Endothelial cell of umbilical vein (primary cell): ENCODE measurements at regions of chr15 and their contacts with region 1.

Region 1: DNA sequence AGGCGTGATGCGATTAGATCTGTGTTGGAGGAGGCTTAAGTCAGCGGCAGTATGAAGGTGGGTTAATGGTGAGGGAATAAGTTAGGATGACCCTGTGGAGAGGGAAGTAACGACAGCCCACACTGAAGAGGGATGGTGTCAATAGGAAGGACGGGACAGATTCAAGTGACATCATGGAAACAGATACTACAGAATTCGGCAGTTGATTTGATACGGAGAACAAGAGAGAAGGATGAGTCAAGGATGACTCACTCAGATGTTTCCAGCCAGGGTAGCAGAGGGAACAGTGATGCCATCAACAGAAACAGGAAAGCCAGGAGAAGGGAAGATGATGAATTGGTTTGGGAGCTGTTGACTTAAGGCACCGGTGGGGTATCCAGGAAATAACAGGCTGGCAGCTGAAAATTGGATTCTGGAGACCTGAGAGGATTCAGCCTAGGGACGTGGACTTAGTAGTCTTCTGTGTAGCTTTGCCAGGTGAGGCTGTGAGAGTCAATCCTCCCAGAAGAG is 38.0 kb downstream of the SHC4 start:
- DNase-seq: peak; percentile 59
- H3K4me3 ChIP-seq: no peak overlapping the region
- H3K27ac ChIP-seq: no peak overlapping the region
- H3K4me1 ChIP-seq: peaks cover 10% of the 10 kb centered on the region
- H3K27me3 ChIP-seq: peaks cover 2 to 9% of the 10 kb centered on the region in 2 experiments
- CTCF ChIP-seq: no peak
- POLR2A ChIP-seq: no peak

Region 2: DNA sequence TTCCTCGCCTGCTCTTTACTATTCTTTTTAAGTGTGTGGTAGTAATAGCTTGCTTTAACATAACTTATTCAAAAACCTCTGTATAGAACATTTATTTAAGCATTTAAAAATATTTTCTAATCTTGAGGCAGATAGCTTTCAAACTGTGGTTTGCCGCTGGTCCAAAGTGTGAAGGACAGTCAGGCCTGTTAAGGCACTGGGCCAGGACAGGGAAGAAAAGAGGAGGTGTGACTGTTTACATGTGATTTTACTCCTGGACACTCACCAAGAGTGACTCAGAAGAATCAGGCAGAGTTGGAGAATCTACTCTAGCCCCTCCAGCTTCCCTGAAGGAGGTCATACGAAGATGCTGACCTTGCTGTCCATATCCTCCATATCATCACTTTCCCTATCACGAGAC is 159.6 kb before region 1 on chr15:
- CTCF ChIA-PET with region 1: no interaction called
- POLR2A ChIA-PET with region 1: no interaction called
- dilution Hi-C with region 1: no loop called
- intact Hi-C with region 1: no loop called
- DNase-seq: no peak
- H3K4me3 ChIP-seq: no peak overlapping the region
- H3K27ac ChIP-seq: no peak overlapping the region
- H3K4me1 ChIP-seq: no peaks in the 10 kb centered on the region
- H3K27me3 ChIP-seq: no peaks in the 10 kb centered on the region
- CTCF ChIP-seq: no peak
- POLR2A ChIP-seq: no peak

Region 3: DNA sequence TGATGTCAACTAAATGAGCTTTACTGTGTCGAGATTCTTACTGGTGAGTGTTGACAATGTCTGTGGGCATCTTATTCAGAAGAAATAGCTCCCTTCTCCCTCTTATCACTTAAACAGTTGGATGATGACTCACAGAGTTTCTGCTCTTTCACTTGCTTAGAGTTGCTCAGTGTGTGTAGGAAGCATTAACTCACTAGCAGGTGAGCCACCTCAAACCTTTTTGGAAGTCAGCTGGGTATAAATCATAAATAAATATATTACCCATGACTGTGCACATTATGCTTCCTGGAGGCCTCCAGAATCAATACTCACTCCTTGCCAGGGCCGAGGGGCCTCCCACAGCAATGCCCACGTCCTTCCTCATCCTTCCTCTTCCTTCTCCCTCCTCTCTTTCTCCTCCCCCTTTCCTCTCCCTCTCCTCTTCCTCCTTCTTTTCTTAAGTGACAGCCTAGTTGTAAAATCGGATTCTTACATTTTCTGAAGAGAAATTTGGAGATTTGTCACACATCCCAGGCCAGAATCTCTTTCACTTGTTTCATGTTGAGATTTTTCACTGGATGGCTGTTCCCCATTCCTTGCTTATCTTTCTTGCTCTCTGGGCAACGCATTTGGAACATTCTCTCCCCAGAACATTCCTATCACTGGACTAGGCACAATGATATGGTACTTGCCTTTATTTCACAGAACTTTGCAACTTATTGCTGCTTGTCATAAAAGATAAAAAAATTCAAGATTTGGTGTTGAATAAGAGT is 20.5 kb after region 1 on chr15:
- CTCF ChIA-PET with region 1: no interaction called
- POLR2A ChIA-PET with region 1: no interaction called
- dilution Hi-C with region 1: no loop called
- intact Hi-C with region 1: loop called (anchors 1 kb)
- DNase-seq: peak; percentile 8
- H3K4me3 ChIP-seq: no peak overlapping the region
- H3K27ac ChIP-seq: no peak overlapping the region
- H3K4me1 ChIP-seq: peaks cover 7% of the 10 kb centered on the region
- H3K27me3 ChIP-seq: peaks cover 2% of the 10 kb centered on the region in 2 experiments
- CTCF ChIP-seq: no peak
- POLR2A ChIP-seq: no peak

Region 4: GRCh38 chr15:48992545-48992944 is 66.8 kb after region 1 on chr15:
- CTCF ChIA-PET with region 1: no interaction called
- POLR2A ChIA-PET with region 1: no interaction called
- dilution Hi-C with region 1: no loop called
- intact Hi-C with region 1: no loop called
- DNase-seq: no peak
- H3K4me3 ChIP-seq: no peak overlapping the region
- H3K27ac ChIP-seq: no peak overlapping the region
- H3K4me1 ChIP-seq: no peaks in the 10 kb centered on the region
- H3K27me3 ChIP-seq: no peaks in the 10 kb centered on the region
- CTCF ChIP-seq: no peak
- POLR2A ChIP-seq: no peak